CD14-positive monocyte (primary cell): ENCODE measurements at regions of chr3 and their contacts with region 1.

Region 1: GRCh38 chr3:15324379-15324808 is 8.0 kb downstream of the SH3BP5 start:
- DNase-seq: no peak
- H3K4me3 ChIP-seq: no peak overlapping the region
- H3K4me3 Mint-ChIP-seq: no peak overlapping the region
- H3K27ac ChIP-seq: no peak overlapping the region
- H3K27ac Mint-ChIP-seq: no peak overlapping the region
- H3K4me1 ChIP-seq: peaks cover 8 to 13% of the 10 kb centered on the region in 2 donors
- H3K4me1 Mint-ChIP-seq: peaks cover 24% of the 10 kb centered on the region
- H3K27me3 ChIP-seq: peaks cover 0 to 1% of the 10 kb centered on the region in 2 donors
- H3K27me3 Mint-ChIP-seq: peaks cover 0 to 8% (median 6%) of the 10 kb centered on the region in 3 donors
- CTCF ChIP-seq: no peak

Region 2: GRCh38 chr3:15108082-15108545 is 216.3 kb before region 1 on chr3:
- intact Hi-C with region 1: no loop called
- DNase-seq: peak; percentile 62 to 74 (median 68)
- H3K4me3 ChIP-seq: no peak overlapping the region
- H3K4me3 Mint-ChIP-seq: peak overlapping the region in 1 of 2 donors; percentile 46
- H3K27ac ChIP-seq: no peak overlapping the region
- H3K27ac Mint-ChIP-seq: peak overlapping the region in 1 of 7 donors; percentile 66
- H3K4me1 ChIP-seq: peaks cover 14 to 16% of the 10 kb centered on the region in 2 donors
- H3K4me1 Mint-ChIP-seq: peaks cover 15% of the 10 kb centered on the region
- H3K27me3 ChIP-seq: no peaks in the 10 kb centered on the region
- H3K27me3 Mint-ChIP-seq: peaks cover 2 to 12% (median 2%) of the 10 kb centered on the region in 3 donors
- CTCF ChIP-seq: peak; percentile 95

Region 3: DNA sequence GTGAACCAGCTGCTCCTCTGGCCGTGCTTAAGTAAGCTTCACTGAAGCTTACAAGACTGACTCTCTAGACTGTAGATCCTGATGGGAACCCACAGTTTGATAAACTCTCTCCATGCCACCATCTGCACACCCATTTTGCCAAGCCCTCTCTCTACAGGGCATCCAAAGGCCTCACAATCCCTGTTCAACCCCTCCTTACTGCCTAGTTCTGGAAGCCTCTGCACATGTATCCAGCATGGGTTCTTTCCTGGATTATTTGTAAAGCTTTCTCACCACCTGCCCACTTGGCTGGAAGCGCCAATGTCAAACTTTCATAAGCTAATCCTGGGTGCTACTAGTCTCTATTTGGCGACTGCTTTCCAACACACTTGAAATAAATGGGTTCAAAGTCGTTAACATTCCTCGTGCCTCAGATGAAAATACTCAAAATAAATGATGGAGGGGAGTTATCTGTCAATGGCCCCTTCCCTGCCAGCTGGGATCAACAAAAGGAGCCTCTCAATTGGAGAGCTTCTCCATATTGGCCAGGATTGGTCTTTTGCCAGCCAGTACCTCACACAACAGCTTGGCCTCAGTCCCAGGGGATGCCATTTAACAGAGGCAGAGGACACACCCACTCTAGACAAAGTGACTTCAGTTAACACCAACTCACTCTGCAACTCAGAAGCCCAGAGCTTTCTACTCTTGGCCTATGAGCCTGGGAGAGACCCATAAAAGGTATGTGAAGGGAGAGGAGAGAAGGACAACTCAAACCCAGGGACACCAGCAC is 40.1 kb before region 1 on chr3:
- intact Hi-C with region 1: no loop called
- DNase-seq: no peak
- H3K4me3 ChIP-seq: no peak overlapping the region
- H3K4me3 Mint-ChIP-seq: no peak overlapping the region
- H3K27ac ChIP-seq: no peak overlapping the region
- H3K27ac Mint-ChIP-seq: peak overlapping the region in 3 of 7 donors; percentile 46 to 84 (median 61)
- H3K4me1 ChIP-seq: peaks cover 29 to 37% of the 10 kb centered on the region in 2 donors
- H3K4me1 Mint-ChIP-seq: peaks cover 47% of the 10 kb centered on the region
- H3K27me3 ChIP-seq: no peaks in the 10 kb centered on the region
- H3K27me3 Mint-ChIP-seq: peaks cover 0 to 9% (median 4%) of the 10 kb centered on the region in 3 donors
- CTCF ChIP-seq: no peak

Region 4: DNA sequence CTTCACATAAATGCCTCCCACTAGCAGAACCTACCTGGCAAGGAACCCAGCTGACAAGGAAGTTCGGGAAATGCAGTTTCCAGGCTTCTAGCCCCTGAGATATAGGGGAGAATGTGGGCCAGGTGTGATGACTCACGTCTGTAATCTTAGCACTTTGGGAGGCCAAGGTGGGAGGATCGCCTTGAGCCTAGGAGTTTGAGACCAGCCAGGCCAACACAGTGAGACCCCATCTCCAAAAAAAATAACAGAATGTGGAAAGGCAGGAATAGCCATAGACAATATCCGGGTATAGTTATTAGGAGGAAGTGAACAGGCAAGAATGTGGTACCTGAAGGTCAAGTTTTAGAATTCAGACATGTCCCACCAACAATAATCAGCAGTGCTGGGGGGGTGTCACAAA is 48.5 kb after region 1 on chr3:
- intact Hi-C with region 1: loop called in 1 of 2 experiments (anchors 5 kb)
- DNase-seq: no peak
- H3K4me3 ChIP-seq: no peak overlapping the region
- H3K4me3 Mint-ChIP-seq: no peak overlapping the region
- H3K27ac ChIP-seq: no peak overlapping the region
- H3K27ac Mint-ChIP-seq: no peak overlapping the region
- H3K4me1 ChIP-seq: peaks cover 11 to 17% of the 10 kb centered on the region in 2 donors
- H3K4me1 Mint-ChIP-seq: peaks cover 18% of the 10 kb centered on the region
- H3K27me3 ChIP-seq: no peaks in the 10 kb centered on the region
- H3K27me3 Mint-ChIP-seq: peaks cover 0 to 2% (median 0%) of the 10 kb centered on the region in 3 donors
- CTCF ChIP-seq: no peak

Region 5: GRCh38 chr3:15964605-15965442 is 640.4 kb after region 1 on chr3:
- intact Hi-C with region 1: no loop called
- DNase-seq: peak; percentile 21 to 39 (median 30)
- H3K4me3 ChIP-seq: peak overlapping the region in 1 of 3 experiments; percentile 16
- H3K4me3 Mint-ChIP-seq: peak overlapping the region in 1 of 2 donors; percentile 84
- H3K27ac ChIP-seq: peak overlapping the region in 1 of 2 donors; percentile 58
- H3K27ac Mint-ChIP-seq: peak overlapping the region in 6 of 7 donors; percentile 31 to 84 (median 70)
- H3K4me1 ChIP-seq: peaks cover 7 to 11% of the 10 kb centered on the region in 2 donors
- H3K4me1 Mint-ChIP-seq: peaks cover 11% of the 10 kb centered on the region
- H3K27me3 ChIP-seq: no peaks in the 10 kb centered on the region
- H3K27me3 Mint-ChIP-seq: peaks cover 0 to 3% (median 3%) of the 10 kb centered on the region in 3 donors
- CTCF ChIP-seq: no peak